GM12878 (cell line): ENCODE measurements at regions of chr2 and their contacts with region 1.

Region 1: DNA sequence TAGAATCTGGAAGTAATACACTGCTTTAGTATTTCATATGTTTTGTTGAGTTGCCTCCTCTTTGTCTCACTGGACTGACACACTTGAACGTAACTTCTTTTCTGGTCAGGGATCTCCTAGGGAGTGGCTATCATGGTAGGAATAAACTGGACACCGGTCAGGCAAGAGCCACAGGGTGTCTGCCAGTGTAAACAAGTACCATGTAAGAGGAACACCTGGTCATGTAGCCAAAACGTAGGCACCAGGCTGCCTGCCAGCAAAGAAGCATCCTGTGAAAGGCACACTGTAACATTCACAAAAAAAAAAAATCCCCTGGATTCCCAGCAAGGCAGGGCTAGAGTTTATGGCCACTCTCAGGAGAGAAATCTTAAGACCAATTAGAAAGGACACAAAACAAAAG is 372.8 kb upstream of the RND3 start:
- DNase-seq: no peak
- ATAC-seq: no peak
- H3K4me3 ChIP-seq: no peak overlapping the region
- H3K27ac ChIP-seq: no peak overlapping the region
- H3K4me1 ChIP-seq: no peaks in the 10 kb centered on the region
- H3K27me3 ChIP-seq: no peaks in the 10 kb centered on the region
- CTCF ChIP-seq: no peak
- EP300 ChIP-seq: no peak
- POLR2A ChIP-seq: no peak
- RAD21 ChIP-seq: no peak

Region 2: GRCh38 chr2:150787353-150788093 is 72.8 kb before region 1 on chr2:
- CTCF ChIA-PET with region 1: no interaction called
- POLR2A ChIA-PET with region 1: no interaction called
- RAD21 ChIA-PET with region 1: no interaction called
- SMC1A ChIA-PET with region 1: no interaction called
- in situ Hi-C with region 1: no loop called
- intact Hi-C with region 1: loop called (anchors 2 kb)
- DNase-seq: no peak
- ATAC-seq: no peak
- H3K4me3 ChIP-seq: no peak overlapping the region
- H3K27ac ChIP-seq: no peak overlapping the region
- H3K4me1 ChIP-seq: no peaks in the 10 kb centered on the region
- H3K27me3 ChIP-seq: no peaks in the 10 kb centered on the region
- CTCF ChIP-seq: no peak
- EP300 ChIP-seq: no peak
- POLR2A ChIP-seq: no peak
- RAD21 ChIP-seq: no peak